Activated CD4-positive, alpha-beta T cell treated with anti-CD3 and anti-CD28 coated beads for 36 hours (primary cell): ENCODE measurements at regions of chr22 and their contacts with region 1.

Region 1: GRCh38 chr22:44701824-44702478 is at the start of gene PRR5:
- DNase-seq: peak; percentile 89
- ATAC-seq: peak; percentile 88
- H3K4me3 Mint-ChIP-seq: peak within 1 kb of the TSS; percentile 72
- H3K27ac Mint-ChIP-seq: no peak within 1 kb of the TSS
- H3K4me1 Mint-ChIP-seq: peaks cover 9% of the 10 kb centered on the region
- H3K27me3 Mint-ChIP-seq: no peaks in the 10 kb centered on the region
- total RNA-seq, gene PRR5: 13.6 TPM

Region 2: GRCh38 chr22:43955040-43955882 is 746.7 kb before region 1 on chr22 and contains the start of gene SAMM50:
- CTCF ChIA-PET with region 1: no interaction called
- POLR2A ChIA-PET with region 1: no interaction called
- intact Hi-C with region 1: loop called in 1 of 2 experiments (anchors 1 kb)
- DNase-seq: peak; percentile 95
- ATAC-seq: peak; percentile 97
- H3K4me3 Mint-ChIP-seq: peak within 1 kb of the TSS; percentile 99
- H3K27ac Mint-ChIP-seq: peak within 1 kb of the TSS; percentile 96
- H3K4me1 Mint-ChIP-seq: peaks cover 25% of the 10 kb centered on the region
- H3K27me3 Mint-ChIP-seq: no peaks in the 10 kb centered on the region
- total RNA-seq, gene SAMM50: 35.2 to 43.8 TPM

Region 3: GRCh38 chr22:44684506-44685383 is 17.2 kb before region 1 on chr22:
- CTCF ChIA-PET with region 1: interaction called, 32 read pairs
- POLR2A ChIA-PET with region 1: no interaction called
- intact Hi-C with region 1: loop called (anchors 1 kb)
- DNase-seq: peak; percentile 94
- ATAC-seq: peak; percentile 81
- H3K4me3 Mint-ChIP-seq: peak overlapping the region; percentile 15
- H3K27ac Mint-ChIP-seq: peak overlapping the region; percentile 87
- H3K4me1 Mint-ChIP-seq: peaks cover 52% of the 10 kb centered on the region
- H3K27me3 Mint-ChIP-seq: no peaks in the 10 kb centered on the region

Region 4: GRCh38 chr22:44752285-44753188 is 50.6 kb after region 1 on chr22 and contains the start of gene ARHGAP8:
- CTCF ChIA-PET with region 1: interaction called, 3 read pairs
- POLR2A ChIA-PET with region 1: no interaction called
- intact Hi-C with region 1: loop called in 1 of 2 experiments (anchors 1 kb)
- DNase-seq: peak; percentile 55
- ATAC-seq: peak; percentile 74
- H3K4me3 Mint-ChIP-seq: peak within 1 kb of the TSS; percentile 67
- H3K27ac Mint-ChIP-seq: no peak within 1 kb of the TSS
- H3K4me1 Mint-ChIP-seq: peaks cover 3% of the 10 kb centered on the region
- H3K27me3 Mint-ChIP-seq: peaks cover 41% of the 10 kb centered on the region
- total RNA-seq, gene ARHGAP8: 3.3 to 3.4 TPM

Region 5: GRCh38 chr22:44862981-44863736 is 161.2 kb after region 1 on chr22:
- CTCF ChIA-PET with region 1: no interaction called
- POLR2A ChIA-PET with region 1: no interaction called
- intact Hi-C with region 1: no loop called
- DNase-seq: no peak
- ATAC-seq: no peak
- H3K4me3 Mint-ChIP-seq: no peak overlapping the region
- H3K27ac Mint-ChIP-seq: no peak overlapping the region
- H3K4me1 Mint-ChIP-seq: no peaks in the 10 kb centered on the region
- H3K27me3 Mint-ChIP-seq: peaks cover 2% of the 10 kb centered on the region

Region 6: GRCh38 chr22:44995105-44995514 is 293.2 kb after region 1 on chr22:
- CTCF ChIA-PET with region 1: no interaction called
- POLR2A ChIA-PET with region 1: no interaction called
- intact Hi-C with region 1: loop called in 1 of 2 experiments (anchors 10 kb)
- DNase-seq: no peak
- ATAC-seq: no peak
- H3K4me3 Mint-ChIP-seq: no peak overlapping the region
- H3K27ac Mint-ChIP-seq: no peak overlapping the region
- H3K4me1 Mint-ChIP-seq: no peaks in the 10 kb centered on the region
- H3K27me3 Mint-ChIP-seq: peaks cover 8% of the 10 kb centered on the region

Region 7: DNA sequence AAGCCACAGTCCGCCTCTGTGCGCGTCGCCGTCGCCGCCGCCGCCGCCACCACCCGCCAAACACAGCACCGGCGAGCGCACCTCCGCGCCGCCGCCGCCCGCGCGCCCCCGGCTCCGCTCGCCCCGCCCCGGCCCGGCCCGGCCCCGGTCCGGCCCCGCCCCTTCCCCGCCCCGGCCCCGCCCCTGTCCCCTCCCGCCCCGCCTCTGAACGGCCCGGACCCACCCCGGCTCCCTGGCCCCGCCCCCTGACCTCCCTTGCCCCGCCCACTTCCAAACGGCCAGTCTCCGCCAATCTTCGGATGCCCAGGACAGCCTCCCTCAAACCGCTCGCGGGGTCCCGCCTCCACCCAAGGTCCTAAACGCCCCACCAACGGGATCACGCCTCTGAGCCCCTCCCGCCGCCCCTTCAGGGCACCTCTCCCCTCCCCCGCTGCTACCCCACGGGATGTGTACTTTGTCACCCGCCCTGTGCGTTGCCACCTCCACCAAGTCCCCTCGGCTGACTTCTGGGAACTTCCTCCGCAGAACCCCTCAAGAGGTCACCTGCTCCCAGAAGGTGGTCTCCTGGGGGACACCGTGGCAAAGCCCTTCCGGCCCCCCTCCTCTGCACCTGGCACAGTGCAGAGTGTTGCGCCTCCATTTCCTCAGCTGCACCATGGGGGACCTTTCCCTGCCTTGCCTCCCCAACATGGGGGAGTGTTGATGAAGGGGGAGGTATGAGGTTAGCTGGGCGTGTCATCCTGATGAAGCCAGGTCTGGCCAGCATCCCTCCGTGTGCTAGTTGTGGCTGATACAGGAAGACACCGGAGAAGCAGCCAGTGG is 539.1 kb after region 1 on chr22 and contains the start of gene KIAA0930:
- CTCF ChIA-PET with region 1: no interaction called
- POLR2A ChIA-PET with region 1: no interaction called
- intact Hi-C with region 1: loop called in 1 of 2 experiments (anchors 1 kb)
- DNase-seq: peak; percentile 91
- ATAC-seq: peak; percentile 69
- H3K4me3 Mint-ChIP-seq: peak within 1 kb of the TSS; percentile 89
- H3K27ac Mint-ChIP-seq: peak within 1 kb of the TSS; percentile 78
- H3K4me1 Mint-ChIP-seq: peaks cover 10% of the 10 kb centered on the region
- H3K27me3 Mint-ChIP-seq: no peaks in the 10 kb centered on the region
- total RNA-seq, gene KIAA0930: 24.8 to 29.6 TPM